ENCODE measurements at regions of chr10 and their contacts with region 1.

Region 1: GRCh38 chr10:77710759-77711682 is 73.4 kb upstream of the KCNMA1 start:
- DNase-seq: peak; percentile 43
- H3K4me3 ChIP-seq: peak overlapping the region in 2 of 3 experiments; percentile 4 to 42
- H3K27ac ChIP-seq: no peak overlapping the region
- H3K4me1 ChIP-seq: peaks cover 8% of the 10 kb centered on the region
- H3K27me3 ChIP-seq: no peaks in the 10 kb centered on the region
- CTCF ChIP-seq: peak; percentile 92 to 99

Region 2: GRCh38 chr10:77173615-77174461 is 537.2 kb before region 1 on chr10:
- CTCF ChIA-PET with region 1: interaction called, 10 read pairs
- dilution Hi-C with region 1: no loop called
- in situ Hi-C with region 1: no loop called
- intact Hi-C with region 1: loop called (anchors 1 kb)
- DNase-seq: peak; percentile 62
- H3K4me3 ChIP-seq: no peak overlapping the region
- H3K27ac ChIP-seq: no peak overlapping the region
- H3K4me1 ChIP-seq: peaks cover 7% of the 10 kb centered on the region
- H3K27me3 ChIP-seq: no peaks in the 10 kb centered on the region
- CTCF ChIP-seq: peak; percentile 93 to 95

Region 3: DNA sequence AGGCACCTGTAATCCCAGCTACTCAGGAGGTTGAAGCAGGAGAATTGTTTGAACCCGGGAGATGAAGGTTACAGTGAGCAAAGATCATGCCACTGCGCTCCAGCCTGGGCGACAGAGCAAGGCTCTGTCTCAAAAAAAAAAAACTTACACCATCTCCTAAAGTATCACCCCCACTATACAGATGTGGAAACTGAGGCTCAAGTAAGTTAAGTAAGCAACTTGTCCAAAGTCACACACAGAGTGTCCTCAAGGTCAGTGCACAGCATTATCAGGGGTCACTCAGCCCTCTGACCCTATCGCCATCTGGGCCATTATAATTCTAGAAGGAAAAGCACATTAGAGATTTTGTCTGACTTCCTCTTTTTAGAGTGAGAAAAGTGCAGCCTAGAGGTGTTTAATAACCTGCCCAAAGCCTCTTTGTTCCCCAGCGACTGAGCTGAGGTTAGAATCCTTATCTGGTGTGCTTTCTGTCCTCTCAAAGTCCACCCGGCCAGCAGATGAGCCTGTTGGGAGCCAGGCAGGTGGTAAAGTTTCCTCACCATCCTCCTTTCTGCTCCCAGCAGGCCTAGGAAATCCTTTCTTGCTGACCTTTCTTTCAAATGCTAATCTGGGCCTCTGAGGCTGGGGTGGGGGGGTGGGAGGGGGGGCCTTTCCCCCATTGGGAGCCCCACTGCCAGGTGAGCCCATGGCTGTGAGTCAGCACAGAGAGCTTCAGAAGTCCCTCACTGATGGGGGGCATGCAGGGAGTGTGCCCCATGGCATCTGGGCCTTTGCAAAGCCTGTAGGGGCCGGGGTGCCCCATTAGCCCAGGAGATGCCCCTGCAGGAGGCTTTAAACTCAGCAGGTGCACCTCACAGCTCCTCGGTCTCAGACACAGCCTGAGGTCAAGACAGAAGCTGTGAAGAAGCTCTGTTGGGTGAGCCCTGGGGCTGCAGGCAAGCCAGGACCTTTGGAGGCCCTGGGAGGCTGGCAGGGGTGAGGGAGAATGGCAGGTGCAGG is 61.4 kb before region 1 on chr10:
- CTCF ChIA-PET with region 1: no interaction called
- dilution Hi-C with region 1: no loop called
- in situ Hi-C with region 1: no loop called
- intact Hi-C with region 1: loop called (anchors 2 kb)
- DNase-seq: no peak
- H3K4me3 ChIP-seq: no peak overlapping the region
- H3K27ac ChIP-seq: no peak overlapping the region
- H3K4me1 ChIP-seq: peaks cover 13% of the 10 kb centered on the region
- H3K27me3 ChIP-seq: no peaks in the 10 kb centered on the region
- CTCF ChIP-seq: no peak

Region 4: GRCh38 chr10:77756319-77757232 is 45.6 kb after region 1 on chr10:
- CTCF ChIA-PET with region 1: interaction called, 6 read pairs
- dilution Hi-C with region 1: no loop called
- in situ Hi-C with region 1: loop called in 1 of 2 experiments (anchors 5 kb)
- intact Hi-C with region 1: loop called (anchors 1 kb)
- DNase-seq: peak; percentile 33
- H3K4me3 ChIP-seq: no peak overlapping the region
- H3K27ac ChIP-seq: no peak overlapping the region
- H3K4me1 ChIP-seq: peaks cover 8% of the 10 kb centered on the region
- H3K27me3 ChIP-seq: no peaks in the 10 kb centered on the region
- CTCF ChIP-seq: peak; percentile 79 to 85

Region 5: DNA sequence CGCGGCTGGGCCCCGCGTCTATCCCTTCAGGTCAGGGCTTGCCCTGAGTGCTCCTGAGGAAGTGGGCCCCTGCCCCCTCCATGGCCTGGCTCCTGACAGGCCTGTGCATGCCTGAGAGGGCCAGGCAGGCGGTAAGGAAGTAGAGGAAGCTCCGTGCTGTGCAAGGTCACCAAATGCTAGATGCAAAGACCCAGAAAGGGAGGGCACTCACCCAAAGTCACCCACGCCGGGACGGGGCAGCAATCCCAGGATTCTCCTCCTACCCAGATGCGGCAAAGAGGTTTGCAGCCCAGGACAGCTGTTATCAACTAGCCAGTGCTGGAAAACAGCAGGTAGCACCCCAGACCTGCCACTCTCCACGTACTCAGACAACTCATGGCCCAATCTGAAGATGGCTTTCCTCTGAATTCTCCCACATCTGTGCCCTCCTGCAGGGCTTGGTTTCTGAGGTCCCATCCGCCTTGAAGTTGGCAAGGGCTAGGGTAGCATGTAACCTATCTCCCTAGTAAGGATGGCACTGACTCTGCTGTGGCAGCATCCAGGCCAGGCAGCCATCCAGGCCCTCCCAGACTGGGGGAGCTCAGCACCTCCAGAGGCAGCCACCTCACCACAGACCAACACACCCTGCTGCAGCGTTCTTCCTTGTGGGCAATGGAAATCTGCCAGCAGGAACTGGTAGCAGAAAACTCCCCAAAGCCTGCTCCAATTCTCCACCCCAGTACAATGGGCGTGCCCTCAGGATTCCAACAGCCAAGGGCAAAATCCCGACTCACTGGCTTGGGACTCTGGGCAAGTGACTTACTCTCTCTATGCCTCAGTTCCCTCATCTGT is 187.8 kb after region 1 on chr10:
- CTCF ChIA-PET with region 1: no interaction called
- dilution Hi-C with region 1: no loop called
- in situ Hi-C with region 1: no loop called
- intact Hi-C with region 1: no loop called
- DNase-seq: peak; percentile 98
- H3K4me3 ChIP-seq: peak overlapping the region in 2 of 3 experiments; percentile 12 to 18
- H3K27ac ChIP-seq: peak overlapping the region; percentile 83
- H3K4me1 ChIP-seq: peaks cover 33% of the 10 kb centered on the region
- H3K27me3 ChIP-seq: no peaks in the 10 kb centered on the region
- CTCF ChIP-seq: no peak

Region 6: DNA sequence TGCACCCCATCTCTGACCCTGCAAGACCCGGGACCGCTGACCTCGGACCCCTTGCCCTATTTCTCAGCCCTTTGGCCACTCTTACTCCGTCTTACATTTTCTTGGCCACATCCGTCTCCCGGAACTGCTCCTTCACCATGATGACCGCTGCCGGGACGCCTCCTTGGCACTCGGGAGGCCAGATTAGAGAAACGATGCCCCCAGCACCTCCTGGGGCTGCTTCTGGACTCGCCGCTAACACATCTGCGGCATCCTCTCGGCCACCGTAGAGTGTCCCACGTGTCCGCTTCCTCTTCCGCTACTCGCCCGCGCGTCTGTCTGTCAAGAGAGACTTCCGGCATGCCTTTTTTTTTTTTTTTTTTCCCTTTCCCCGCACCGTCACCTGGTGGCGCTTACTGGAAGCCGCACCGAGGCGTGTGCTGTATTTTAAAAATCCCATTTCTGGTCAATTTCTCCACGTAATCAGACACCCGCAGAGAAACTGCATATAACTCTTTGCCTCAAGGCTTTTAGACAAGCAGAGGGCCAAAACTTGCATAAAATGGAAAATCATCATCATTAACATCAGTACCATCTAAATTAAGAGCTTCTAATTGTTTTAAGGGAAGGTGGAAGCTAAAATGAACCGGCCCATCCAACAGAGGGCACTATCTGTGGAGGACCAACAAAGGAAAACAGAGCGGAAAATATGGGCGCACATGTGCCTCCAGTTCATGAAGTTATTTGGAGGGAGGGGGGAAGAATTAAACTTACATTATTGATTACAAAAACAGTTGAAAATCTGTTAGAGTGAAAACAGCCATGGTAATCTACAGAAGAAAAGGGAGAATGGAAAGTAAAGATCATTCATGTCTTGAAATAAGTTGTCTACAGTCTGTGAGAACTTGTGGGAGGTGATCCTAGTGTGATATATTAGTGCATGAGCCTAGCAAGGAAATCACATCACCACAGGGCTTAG is 318.5 kb after region 1 on chr10 and contains the start of gene POLR3A:
- CTCF ChIA-PET with region 1: no interaction called
- dilution Hi-C with region 1: no loop called
- in situ Hi-C with region 1: no loop called
- intact Hi-C with region 1: loop called (anchors 10 kb)
- DNase-seq: peak; percentile 96
- H3K4me3 ChIP-seq: peak within 1 kb of the TSS; percentile 87 to 94 (median 87)
- H3K27ac ChIP-seq: peak within 1 kb of the TSS; percentile 74
- H3K4me1 ChIP-seq: peaks cover 38% of the 10 kb centered on the region
- H3K27me3 ChIP-seq: no peaks in the 10 kb centered on the region
- CTCF ChIP-seq: peak; percentile 53 to 72
- total RNA-seq, gene POLR3A: 20.8 to 21.2 TPM

Measured in mammary epithelial cell (primary cell).